Naive thymus-derived CD4-positive, alpha-beta T cell (primary cell): ENCODE measurements at regions of chr13 and their contacts with region 1.

Region 1: DNA sequence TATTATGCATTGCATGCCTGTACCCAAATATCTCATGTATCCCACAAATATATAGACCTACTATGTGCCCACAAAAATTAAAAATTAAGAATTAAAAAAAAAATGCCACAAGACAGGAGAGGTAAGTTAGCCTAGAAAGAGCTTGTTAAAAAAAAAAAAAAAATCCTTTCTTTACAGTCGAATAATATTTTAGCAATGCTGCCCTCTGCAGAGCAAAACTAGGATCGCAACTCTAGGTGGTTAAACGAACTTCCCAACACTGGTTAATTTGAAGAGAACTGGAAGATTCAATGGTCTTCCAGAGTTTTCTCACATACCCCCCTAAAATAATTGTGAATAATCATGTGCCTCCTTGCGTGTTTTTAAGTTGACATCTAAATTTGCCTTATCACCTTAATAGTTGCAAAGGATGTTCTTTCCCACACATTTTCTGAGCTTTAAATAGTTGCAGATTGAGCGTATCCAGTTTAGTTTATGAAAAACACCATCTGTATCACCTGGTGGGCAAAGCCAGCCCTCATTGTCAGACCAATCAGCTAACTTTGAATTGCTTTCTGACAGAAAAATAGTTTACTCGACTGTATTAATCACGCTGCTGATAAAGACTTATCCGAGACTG is 47.4 kb upstream of the RCBTB2 start:
- DNase-seq: peak; percentile 44 to 79 (median 61)
- ATAC-seq: peak; percentile 84
- H3K4me3 ChIP-seq: no peak overlapping the region
- H3K4me3 Mint-ChIP-seq: no peak overlapping the region
- H3K27ac ChIP-seq: no peak overlapping the region
- H3K27ac Mint-ChIP-seq: no peak overlapping the region
- H3K4me1 ChIP-seq: peaks cover 0 to 6% of the 10 kb centered on the region in 2 donors
- H3K4me1 Mint-ChIP-seq: peaks cover 0 to 25% (median 6%) of the 10 kb centered on the region in 7 donors
- H3K27me3 ChIP-seq: no peaks in the 10 kb centered on the region
- H3K27me3 Mint-ChIP-seq: peaks cover 0 to 68% (median 3%) of the 10 kb centered on the region in 5 donors

Region 2: GRCh38 chr13:48265217-48265815 is 315.0 kb before region 1 on chr13:
- CTCF ChIA-PET with region 1: no interaction called
- POLR2A ChIA-PET with region 1: interaction called, 3 read pairs
- intact Hi-C with region 1: loop called in 1 of 2 experiments (anchors 5 kb)
- DNase-seq: peak in 3 of 9 donors; percentile 17 to 38 (median 27)
- ATAC-seq: peak; percentile 48
- H3K4me3 ChIP-seq: no peak overlapping the region
- H3K4me3 Mint-ChIP-seq: peak overlapping the region in 9 of 10 donors; percentile 15 to 72 (median 54)
- H3K27ac ChIP-seq: no peak overlapping the region
- H3K27ac Mint-ChIP-seq: peak overlapping the region; percentile 7 to 92 (median 86)
- H3K4me1 ChIP-seq: peaks cover 0 to 22% of the 10 kb centered on the region in 2 donors
- H3K4me1 Mint-ChIP-seq: peaks cover 22 to 73% (median 54%) of the 10 kb centered on the region in 7 donors
- H3K27me3 ChIP-seq: no peaks in the 10 kb centered on the region
- H3K27me3 Mint-ChIP-seq: no peaks in the 10 kb centered on the region

Region 3: GRCh38 chr13:48386816-48387215 is 193.5 kb before region 1 on chr13:
- CTCF ChIA-PET with region 1: interaction called, 10 read pairs
- POLR2A ChIA-PET with region 1: no interaction called
- intact Hi-C with region 1: no loop called
- DNase-seq: no peak
- ATAC-seq: no peak
- H3K4me3 ChIP-seq: no peak overlapping the region
- H3K4me3 Mint-ChIP-seq: no peak overlapping the region
- H3K27ac ChIP-seq: no peak overlapping the region
- H3K27ac Mint-ChIP-seq: no peak overlapping the region
- H3K4me1 ChIP-seq: no peaks in the 10 kb centered on the region
- H3K4me1 Mint-ChIP-seq: peaks cover 0 to 10% (median 6%) of the 10 kb centered on the region in 7 donors
- H3K27me3 ChIP-seq: no peaks in the 10 kb centered on the region
- H3K27me3 Mint-ChIP-seq: no peaks in the 10 kb centered on the region

Region 4: GRCh38 chr13:48505597-48506091 is 74.7 kb before region 1 on chr13:
- CTCF ChIA-PET with region 1: interaction called, 10 read pairs
- POLR2A ChIA-PET with region 1: interaction called, 4 read pairs
- intact Hi-C with region 1: loop called in 1 of 2 experiments (anchors 1 kb)
- DNase-seq: peak in 7 of 9 donors; percentile 73 to 88 (median 84)
- ATAC-seq: peak; percentile 85
- H3K4me3 ChIP-seq: peak overlapping the region; percentile 37
- H3K4me3 Mint-ChIP-seq: peak overlapping the region; percentile 51 to 86 (median 76)
- H3K27ac ChIP-seq: peak overlapping the region; percentile 59
- H3K27ac Mint-ChIP-seq: peak overlapping the region; percentile 83 to 98 (median 91)
- H3K4me1 ChIP-seq: peaks cover 34 to 47% of the 10 kb centered on the region in 2 donors
- H3K4me1 Mint-ChIP-seq: peaks cover 47 to 78% (median 61%) of the 10 kb centered on the region in 7 donors
- H3K27me3 ChIP-seq: no peaks in the 10 kb centered on the region
- H3K27me3 Mint-ChIP-seq: peaks cover 0 to 11% (median 0%) of the 10 kb centered on the region in 5 donors

Region 5: GRCh38 chr13:48715977-48716376 is 135.7 kb after region 1 on chr13:
- CTCF ChIA-PET with region 1: no interaction called
- POLR2A ChIA-PET with region 1: no interaction called
- intact Hi-C with region 1: no loop called
- DNase-seq: no peak
- ATAC-seq: no peak
- H3K4me3 ChIP-seq: no peak overlapping the region
- H3K4me3 Mint-ChIP-seq: no peak overlapping the region
- H3K27ac ChIP-seq: no peak overlapping the region
- H3K27ac Mint-ChIP-seq: no peak overlapping the region
- H3K4me1 ChIP-seq: no peaks in the 10 kb centered on the region
- H3K4me1 Mint-ChIP-seq: no peaks in the 10 kb centered on the region
- H3K27me3 ChIP-seq: no peaks in the 10 kb centered on the region
- H3K27me3 Mint-ChIP-seq: peaks cover 0 to 7% (median 0%) of the 10 kb centered on the region in 5 donors